ENCODE measurements at regions of chr19 and their contacts with region 1.

Region 1: DNA sequence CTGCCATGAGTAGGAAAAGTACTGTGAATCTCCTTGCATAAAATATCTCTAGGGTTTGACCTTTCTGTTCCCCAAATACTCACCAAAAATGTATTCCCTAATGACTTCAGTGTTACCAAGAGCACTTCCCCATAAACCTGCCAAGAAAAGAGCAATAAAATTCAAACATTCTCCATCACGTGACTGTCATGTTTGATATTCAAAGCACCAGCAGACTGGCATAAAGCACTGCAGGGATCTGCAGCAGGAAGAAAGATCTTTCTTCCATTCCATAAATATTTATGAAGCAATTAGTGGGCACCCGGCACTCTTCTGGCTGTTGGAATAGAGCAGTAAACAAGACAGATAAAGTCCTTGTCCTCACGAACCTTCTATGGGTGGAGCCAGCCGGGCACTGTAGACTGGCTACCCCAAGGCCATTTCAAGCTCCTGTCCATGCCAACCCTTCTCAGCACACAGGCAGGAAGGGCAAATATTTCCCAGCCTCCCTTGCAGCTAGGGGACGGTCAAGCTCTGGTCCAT is 20.3 kb downstream of the PLA2G4C start:
- DNase-seq: peak; percentile 20

Region 2: DNA sequence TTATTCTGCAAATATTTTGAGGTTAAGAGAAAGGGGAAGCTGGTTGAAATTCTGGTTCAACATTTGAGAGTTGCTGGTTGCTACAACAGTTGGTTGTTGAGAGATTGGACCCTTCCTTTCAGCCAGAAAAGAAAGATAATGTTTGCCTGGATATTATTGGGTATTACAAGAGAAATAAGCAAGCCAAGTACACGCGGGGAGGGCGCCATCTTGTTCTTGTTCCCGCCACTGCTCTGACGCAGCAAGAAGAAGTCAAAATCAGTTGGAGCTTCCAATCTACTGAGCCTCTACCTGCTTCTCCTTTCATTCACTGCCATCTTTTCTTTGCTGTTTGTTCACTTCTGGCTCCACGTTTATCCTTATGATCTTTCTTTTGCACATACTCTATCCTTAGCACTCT is 116.8 kb before region 1 on chr19:
- intact Hi-C with region 1: loop called in 1 of 2 experiments (anchors 10 kb)
- DNase-seq: no peak

Measured in posterior vena cava (tissue), 2 donors.